Right ventricle myocardium inferior (tissue), 1 donor: ENCODE measurements at regions of chr5 and their contacts with region 1.

Region 1: DNA sequence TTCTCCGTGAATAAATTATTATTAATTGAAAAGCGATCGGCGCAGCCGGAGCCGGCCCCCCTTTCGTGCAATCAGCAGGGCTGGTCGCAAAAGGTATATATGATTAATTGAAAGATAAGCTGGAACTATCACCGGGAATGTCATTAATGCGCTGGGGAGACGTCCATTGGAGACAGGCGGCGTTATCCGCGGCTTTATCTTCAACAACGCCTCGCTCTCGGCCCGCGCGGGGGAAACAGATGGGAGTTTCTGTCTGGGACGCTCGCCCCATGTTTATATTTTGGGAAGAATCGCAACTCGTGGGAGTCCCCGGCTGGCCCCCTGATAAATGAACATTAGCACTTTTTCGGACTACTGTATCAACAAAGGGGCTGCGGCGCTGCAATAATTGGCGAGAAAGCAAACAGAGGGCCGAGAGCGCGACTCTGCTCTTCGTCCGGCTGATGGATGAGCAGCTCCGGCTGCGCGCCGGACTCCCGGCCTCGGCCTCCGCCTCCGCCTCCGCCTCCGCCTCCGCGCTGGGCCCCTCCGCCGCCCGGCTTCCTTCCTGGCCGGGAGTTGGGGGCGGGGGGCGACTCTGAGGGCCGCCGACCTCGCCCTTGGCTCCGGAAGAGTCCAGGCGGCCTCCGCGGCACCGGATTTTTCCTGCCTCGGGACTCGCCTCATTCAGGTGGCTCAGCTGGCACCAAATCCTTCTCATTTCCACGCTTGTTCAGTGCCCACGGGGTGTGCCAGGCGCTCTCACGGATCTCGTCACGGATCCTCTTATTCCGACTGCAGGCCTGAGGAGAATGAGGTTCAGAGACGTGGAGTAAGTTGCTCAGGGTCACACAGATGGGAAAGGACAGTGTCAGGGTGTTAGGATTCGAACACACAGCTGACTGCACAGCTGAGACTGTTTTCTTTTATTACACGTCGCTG is 3.6 kb upstream of the NKX2-5 start:
- DNase-seq: no peak
- ATAC-seq: no peak

Region 2: DNA sequence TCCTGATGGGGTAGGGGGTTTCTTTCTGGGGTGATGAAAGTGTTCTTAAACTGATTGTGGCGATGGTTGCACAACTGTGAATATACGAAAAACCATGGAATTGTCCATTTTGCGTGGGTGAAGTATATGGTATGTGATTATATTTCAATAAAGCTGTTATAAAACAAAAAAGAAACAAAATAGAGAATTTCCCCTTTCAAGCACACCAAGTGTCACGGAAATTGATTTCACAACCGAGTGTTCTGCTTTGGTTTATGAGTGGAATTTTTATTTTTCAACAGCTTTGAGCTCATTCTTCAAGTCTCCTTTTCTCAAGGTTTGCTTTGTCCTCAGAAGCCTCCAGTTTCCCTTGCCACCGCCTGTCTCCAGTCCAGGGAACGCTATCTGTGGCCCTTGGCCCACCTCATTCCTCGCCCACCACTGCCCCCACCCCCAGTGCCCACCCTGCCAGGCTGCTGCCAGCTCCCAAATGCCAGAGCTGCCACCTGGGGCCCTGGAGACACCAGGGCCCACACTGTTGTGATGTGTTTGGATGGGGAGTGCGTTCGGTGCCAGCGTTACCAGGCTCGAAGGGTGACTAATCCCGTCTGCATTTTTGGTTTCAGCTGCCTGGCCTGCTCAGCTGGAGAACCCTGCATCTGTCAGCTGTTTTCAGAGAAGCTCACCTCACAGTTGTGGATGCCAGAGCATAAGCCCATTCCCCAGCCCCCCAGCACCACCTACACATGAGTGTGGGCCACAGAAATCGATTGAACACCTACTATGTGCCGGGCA is 498.0 kb before region 1 on chr5:
- intact Hi-C with region 1: loop called (anchors 10 kb)
- DNase-seq: peak; percentile 85
- ATAC-seq: peak; percentile 92

Region 3: DNA sequence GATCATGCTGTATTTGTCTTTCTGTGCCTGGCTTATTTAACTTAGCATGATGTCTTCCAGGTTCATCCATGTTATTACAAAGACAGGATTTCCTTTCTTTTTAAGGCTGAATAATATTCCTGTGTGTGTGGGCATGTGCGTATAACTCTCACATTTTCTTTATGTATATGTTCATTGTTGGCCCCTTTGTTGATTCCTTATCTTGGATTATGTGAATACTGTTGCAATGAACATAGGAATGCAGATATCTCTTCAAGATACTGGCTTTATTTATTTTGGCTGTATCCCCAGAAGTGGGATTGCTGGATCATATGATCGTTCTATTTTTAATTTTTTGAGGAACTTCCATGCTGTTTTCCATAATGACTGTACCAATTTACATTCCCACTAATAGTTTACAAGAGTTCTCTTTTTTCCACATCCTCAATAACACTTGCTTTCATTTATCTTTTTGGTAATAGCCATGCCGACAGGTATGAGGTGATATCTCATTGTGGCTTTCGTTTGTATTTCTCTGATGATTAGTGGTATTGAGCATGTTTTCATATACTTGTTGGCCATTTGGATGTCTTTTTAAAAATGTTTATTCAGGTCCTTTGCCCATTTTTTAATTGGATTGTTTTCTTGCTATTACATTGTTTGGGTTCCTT is 144.4 kb before region 1 on chr5:
- intact Hi-C with region 1: no loop called
- DNase-seq: no peak
- ATAC-seq: no peak

Region 4: DNA sequence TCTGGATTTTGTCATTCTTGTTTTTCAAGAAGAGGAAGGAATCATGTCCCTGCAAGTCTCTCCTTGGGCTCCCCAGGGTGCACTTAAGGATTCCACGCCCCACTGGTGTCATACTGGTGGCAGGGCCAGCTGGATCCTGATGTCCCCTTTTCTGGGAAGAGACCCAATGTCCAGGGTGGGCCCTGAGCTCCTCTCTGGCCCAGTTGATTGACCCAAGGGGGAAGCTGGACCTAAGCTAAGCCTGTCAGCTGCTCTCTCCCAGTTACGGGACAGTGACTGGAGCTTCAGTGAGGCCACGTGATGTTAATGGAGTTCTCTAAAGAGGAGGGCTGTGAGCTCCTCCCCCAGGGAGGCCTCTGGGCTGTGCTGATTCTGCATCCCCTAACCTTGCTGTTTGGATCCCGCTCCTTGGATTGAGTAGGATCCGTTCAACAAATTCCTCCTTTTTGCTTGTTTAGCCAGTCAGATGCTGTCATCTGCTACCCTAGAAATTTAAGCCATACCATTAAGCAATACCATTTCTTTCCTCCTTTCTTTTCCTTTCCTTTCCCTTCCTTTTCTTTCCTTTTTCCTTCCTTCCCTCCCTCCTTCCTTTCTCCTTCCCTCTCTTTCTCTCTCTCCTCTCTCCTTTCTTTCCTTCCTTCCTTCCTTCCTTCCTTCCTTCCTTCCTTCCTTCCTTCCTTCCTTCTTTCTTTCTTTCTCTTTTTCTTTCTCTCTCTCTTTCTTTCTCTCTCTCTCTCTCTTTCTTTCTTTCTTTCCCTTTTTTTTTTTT is 20.8 kb before region 1 on chr5:
- intact Hi-C with region 1: no loop called
- DNase-seq: no peak
- ATAC-seq: peak; percentile 23

Region 5: GRCh38 chr5:173278172-173278571 is 39.6 kb after region 1 on chr5:
- intact Hi-C with region 1: loop called (anchors 1 kb)
- DNase-seq: peak; percentile 83
- ATAC-seq: peak; percentile 88